ENCODE measurements at regions of chrX and their contacts with region 1.

Region 1: DNA sequence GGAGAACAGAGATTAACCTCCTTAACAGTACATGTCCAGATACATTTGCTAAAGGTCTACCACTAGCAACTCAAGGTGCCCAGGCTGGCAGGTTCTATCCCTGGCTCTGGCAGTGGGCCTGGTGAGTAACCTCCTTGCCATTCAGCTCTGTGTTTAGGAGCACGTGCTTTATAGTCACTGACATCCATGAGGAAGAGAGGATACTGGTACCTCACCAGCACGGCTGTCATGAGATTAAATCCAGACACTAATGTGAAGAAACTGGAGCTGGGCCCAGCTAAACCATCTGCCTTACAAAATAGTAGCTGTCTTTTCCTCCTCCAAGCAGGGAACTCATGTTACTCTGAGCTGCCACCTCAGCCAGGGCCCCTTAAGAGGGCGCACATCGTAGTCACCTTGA is 45.3 kb downstream of the GPRASP3 start:
- DNase-seq: no peak
- ATAC-seq: no peak
- H3K4me3 ChIP-seq: no peak overlapping the region
- H3K4me3 Mint-ChIP-seq: no peak overlapping the region
- H3K27ac ChIP-seq: no peak overlapping the region
- H3K27ac Mint-ChIP-seq: no peak overlapping the region
- H3K4me1 ChIP-seq: peaks cover 5 to 6% of the 10 kb centered on the region in 2 experiments
- H3K4me1 Mint-ChIP-seq: peaks cover 5 to 14% (median 10%) of the 10 kb centered on the region in 3 donors
- H3K27me3 ChIP-seq: no peaks in the 10 kb centered on the region
- H3K27me3 Mint-ChIP-seq: no peaks in the 10 kb centered on the region

Region 2: GRCh38 chrX:102560423-102561068 is 205.3 kb before region 1 on chrX:
- CTCF ChIA-PET with region 1: no interaction called
- POLR2A ChIA-PET with region 1: interaction called in 1 of 2 experiments, 12 read pairs
- DNase-seq: no peak
- ATAC-seq: no peak
- H3K4me3 ChIP-seq: no peak overlapping the region
- H3K4me3 Mint-ChIP-seq: no peak overlapping the region
- H3K27ac ChIP-seq: no peak overlapping the region
- H3K27ac Mint-ChIP-seq: no peak overlapping the region
- H3K4me1 ChIP-seq: no peaks in the 10 kb centered on the region
- H3K4me1 Mint-ChIP-seq: no peaks in the 10 kb centered on the region
- H3K27me3 ChIP-seq: no peaks in the 10 kb centered on the region
- H3K27me3 Mint-ChIP-seq: peaks cover 0 to 4% of the 10 kb centered on the region in 2 donors

Measured in T-cell (primary cell).